Calu3 (cell line): ENCODE measurements at regions of chr4 and their contacts with region 1.

Region 1: DNA sequence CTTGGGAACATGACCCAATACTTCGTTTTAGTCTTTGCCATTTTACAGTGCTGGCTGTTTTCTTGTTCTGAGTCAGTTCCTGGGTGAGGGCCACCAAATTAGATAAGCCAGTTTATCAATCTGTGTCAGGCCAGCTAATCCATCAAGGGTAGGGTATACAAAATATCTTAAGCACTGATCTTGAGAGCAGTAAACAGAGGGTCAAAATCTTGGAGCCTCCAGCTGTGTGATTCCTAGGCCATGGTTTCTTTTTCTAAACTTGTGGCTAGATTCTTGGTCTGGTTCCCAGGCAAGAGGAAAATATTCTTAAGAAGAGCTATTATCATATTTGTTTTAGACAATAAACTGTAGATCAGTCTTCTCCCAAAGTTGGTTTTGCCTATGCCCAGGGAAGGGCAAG is 1396.6 kb upstream of the PABPC4L start:
- DNase-seq: no peak
- H3K4me3 Mint-ChIP-seq: no peak overlapping the region
- H3K27ac Mint-ChIP-seq: no peak overlapping the region
- H3K4me1 Mint-ChIP-seq: no peaks in the 10 kb centered on the region
- H3K27me3 Mint-ChIP-seq: no peaks in the 10 kb centered on the region
- CTCF ChIP-seq: no peak

Region 2: DNA sequence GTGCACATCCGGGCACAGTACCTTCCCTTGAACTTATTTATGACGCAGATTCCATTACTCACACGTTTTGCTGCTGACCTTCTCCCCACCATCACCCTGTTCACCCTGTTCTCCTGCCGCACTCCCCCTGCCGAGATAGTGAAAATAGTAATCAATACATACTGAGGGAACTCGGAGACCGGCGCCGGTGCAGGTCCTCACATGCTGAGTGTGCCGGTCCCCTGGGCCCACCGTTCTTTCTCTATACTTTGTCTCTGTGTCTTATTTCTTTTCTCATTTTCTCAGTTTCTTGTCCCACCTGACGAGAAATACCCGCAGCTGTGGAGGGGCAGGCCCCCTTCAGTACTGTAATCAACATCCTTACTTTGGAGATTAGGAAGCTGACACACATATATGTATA is 59.5 kb before region 1 on chr4:
- CTCF ChIA-PET with region 1: interaction called, 10 read pairs
- intact Hi-C with region 1: no loop called
- DNase-seq: no peak
- H3K4me3 Mint-ChIP-seq: no peak overlapping the region
- H3K27ac Mint-ChIP-seq: no peak overlapping the region
- H3K4me1 Mint-ChIP-seq: no peaks in the 10 kb centered on the region
- H3K27me3 Mint-ChIP-seq: no peaks in the 10 kb centered on the region
- CTCF ChIP-seq: no peak